ENCODE measurements at regions of chr1 and their contacts with region 1.

Region 1: GRCh38 chr1:44739361-44740178 is at the start of gene KIF2C:
- DNase-seq: peak; percentile 98
- H3K4me3 ChIP-seq: peak within 1 kb of the TSS; percentile 41 to 57 (median 52)
- H3K27ac ChIP-seq: peak within 1 kb of the TSS; percentile 82 to 89 (median 86)
- H3K4me1 ChIP-seq: peaks cover 0 to 8% (median 6%) of the 10 kb centered on the region in 4 donors
- H3K27me3 ChIP-seq: no peaks in the 10 kb centered on the region
- CTCF ChIP-seq: no peak
- EP300 ChIP-seq: peak in 1 of 4 donors; percentile 54
- POLR2A ChIP-seq: peak; percentile 57 to 74
- total RNA-seq, gene KIF2C: 0.36 to 2.0 (median 1.2) TPM

Region 2: GRCh38 chr1:44707959-44708831 is 31.4 kb before region 1 on chr1:
- intact Hi-C with region 1: no loop called
- DNase-seq: no peak
- H3K4me3 ChIP-seq: peak overlapping the region in 1 of 4 donors; percentile 6
- H3K27ac ChIP-seq: no peak overlapping the region
- H3K4me1 ChIP-seq: peaks cover 0 to 8% (median 0%) of the 10 kb centered on the region in 4 donors
- H3K27me3 ChIP-seq: no peaks in the 10 kb centered on the region
- CTCF ChIP-seq: peak in 2 of 4 experiments; percentile 54 to 58
- EP300 ChIP-seq: no peak
- POLR2A ChIP-seq: no peak

Region 3: DNA sequence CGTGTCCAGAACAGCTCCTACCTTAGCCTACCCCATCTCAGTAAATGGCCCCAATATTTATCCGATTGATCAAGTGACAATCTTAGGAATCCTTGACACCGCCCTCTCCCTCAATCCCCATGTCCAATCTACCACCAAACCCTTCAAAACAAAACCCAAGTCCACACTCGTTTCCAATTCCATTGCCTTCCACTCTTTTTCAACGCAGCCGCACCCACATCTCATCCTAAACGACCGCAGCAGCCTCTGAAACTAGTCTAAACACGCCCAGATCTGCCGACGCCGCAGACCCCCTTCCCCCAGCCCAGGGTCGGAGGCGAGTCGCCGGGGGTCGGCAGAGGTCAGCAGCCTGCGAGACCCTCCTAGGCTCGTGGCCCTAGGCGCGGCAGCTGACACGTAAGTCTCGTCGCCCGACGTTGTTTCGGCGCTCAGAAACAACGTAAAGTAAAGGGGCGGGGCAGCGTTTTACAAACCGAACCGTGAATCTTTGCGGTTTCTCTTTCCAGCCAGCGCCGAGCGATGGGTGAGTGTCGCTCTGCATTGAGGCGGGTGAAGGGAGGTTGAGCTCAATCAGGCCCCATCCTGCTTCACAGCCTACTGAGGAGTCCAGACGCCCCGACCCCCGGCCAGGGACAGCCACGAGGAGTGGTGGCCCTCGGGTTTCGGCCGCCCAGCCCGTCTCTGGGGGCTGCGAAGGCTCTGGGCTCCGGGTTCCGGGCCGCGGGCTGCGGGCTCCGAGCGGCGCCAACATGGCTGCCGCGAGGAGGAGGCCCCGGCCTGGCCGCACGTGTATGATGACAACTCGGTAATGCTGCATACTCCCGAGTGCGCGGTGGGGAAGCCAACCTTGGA is 35.7 kb after region 1 on chr1 and contains the start of gene RPS8:
- intact Hi-C with region 1: loop called (anchors 2 kb)
- DNase-seq: peak; percentile 96
- H3K4me3 ChIP-seq: peak within 1 kb of the TSS; percentile 74 to 91 (median 81)
- H3K27ac ChIP-seq: peak within 1 kb of the TSS; percentile 98 to 99 (median 98)
- H3K4me1 ChIP-seq: peaks cover 0 to 37% (median 26%) of the 10 kb centered on the region in 4 donors
- H3K27me3 ChIP-seq: no peaks in the 10 kb centered on the region
- CTCF ChIP-seq: no peak
- EP300 ChIP-seq: peak in 2 of 4 donors; percentile 23 to 74
- POLR2A ChIP-seq: peak; percentile 94 to 97
- total RNA-seq, gene RPS8: 2,554 to 3,717 (median 3,009) TPM

Measured in sigmoid colon (tissue), 7 donors.